OCI-LY7 (cell line): ENCODE measurements at regions of chr7 and their contacts with region 1.

Region 1: GRCh38 chr7:121395961-121396757 is at the start of gene FAM3C:
- DNase-seq: peak; percentile 91
- H3K4me3 ChIP-seq: peak within 1 kb of the TSS; percentile 88
- H3K27ac ChIP-seq: peak within 1 kb of the TSS; percentile 48
- H3K4me1 ChIP-seq: peaks cover 17% of the 10 kb centered on the region
- CTCF ChIP-seq: peak; percentile 81
- total RNA-seq, gene FAM3C: 18.1 and 22.9 TPM in 2 replicates

Region 2: DNA sequence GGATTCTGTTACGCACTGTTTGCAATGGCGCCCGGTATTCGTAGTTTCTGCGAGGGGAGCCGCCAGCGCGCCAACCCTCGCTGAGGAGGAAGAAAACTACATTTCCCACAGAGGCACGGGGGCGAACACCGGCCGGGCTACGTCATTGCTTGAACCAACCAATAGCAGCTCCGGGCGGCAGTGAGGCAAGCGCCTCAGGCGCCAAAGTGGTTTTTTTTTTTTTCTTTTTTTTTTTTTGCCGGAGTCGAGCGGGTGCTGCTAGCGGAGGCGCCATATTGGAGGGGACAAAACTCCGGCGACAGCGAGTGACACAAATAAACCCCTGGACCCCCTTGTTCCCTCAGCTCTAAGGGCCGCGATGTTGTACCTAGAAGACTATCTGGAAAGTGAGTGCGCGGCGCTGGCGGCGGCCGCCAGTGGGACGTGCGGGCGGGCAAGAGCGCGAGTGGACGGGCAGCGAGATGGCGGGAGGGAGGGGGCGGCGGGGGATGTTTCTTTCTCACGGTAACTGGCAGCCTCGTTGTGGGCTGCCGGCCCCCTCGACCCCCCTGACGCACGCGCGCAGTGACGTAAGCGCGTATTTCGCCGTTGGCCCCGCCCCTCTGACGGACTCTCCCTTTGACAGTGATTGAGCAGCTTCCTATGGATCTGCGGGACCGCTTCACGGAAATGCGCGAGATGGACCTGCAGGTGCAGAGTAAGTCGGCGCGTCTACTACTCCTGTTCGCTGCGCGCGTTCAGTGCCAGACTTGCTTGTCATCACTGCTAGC is 445.4 kb before region 1 on chr7 and contains the start of gene ING3:
- CTCF ChIA-PET with region 1: no interaction called
- POLR2A ChIA-PET with region 1: no interaction called
- intact Hi-C with region 1: loop called (anchors 5 kb)
- DNase-seq: peak; percentile 98
- H3K4me3 ChIP-seq: peak within 1 kb of the TSS; percentile 77
- H3K27ac ChIP-seq: peak within 1 kb of the TSS; percentile 80
- H3K4me1 ChIP-seq: peaks cover 14% of the 10 kb centered on the region
- CTCF ChIP-seq: no peak
- total RNA-seq, gene ING3: 12.5 and 21.4 TPM in 2 replicates

Region 3: DNA sequence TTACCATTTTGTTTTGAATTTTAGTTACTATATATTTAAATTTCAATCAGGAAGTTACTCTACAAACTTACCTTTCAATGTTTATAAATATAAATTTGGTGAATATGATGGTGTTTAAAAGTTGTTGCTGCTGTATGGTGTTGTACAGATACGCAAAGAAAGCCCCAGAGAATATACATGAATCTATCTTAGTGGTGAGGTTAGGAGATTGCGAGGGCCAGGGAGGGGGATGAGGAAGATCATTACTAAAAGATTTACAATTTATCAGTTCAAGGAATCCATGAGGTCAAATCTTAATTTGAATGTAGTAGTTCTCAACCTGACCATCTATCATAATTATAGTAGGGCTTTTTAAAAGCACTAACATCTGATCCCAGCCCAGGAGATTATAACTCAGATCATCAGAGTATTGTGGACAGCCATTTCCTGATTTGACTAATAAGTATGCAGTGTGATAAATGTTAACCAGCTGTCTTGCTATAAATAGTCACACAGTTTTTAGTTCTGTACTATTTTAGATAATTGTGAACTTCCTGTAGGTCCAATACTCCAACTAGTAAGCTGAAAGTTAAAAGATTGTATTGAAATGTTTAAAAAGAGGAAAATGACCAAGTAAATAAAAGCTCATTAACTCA is 23.7 kb before region 1 on chr7:
- CTCF ChIA-PET with region 1: interaction called, 4 read pairs
- POLR2A ChIA-PET with region 1: interaction called, 15 read pairs
- intact Hi-C with region 1: loop called (anchors 2 kb)
- DNase-seq: peak; percentile 59
- H3K4me3 ChIP-seq: peak overlapping the region; percentile 31
- H3K27ac ChIP-seq: peak overlapping the region; percentile 52
- H3K4me1 ChIP-seq: peaks cover 35% of the 10 kb centered on the region
- CTCF ChIP-seq: no peak

Region 4: DNA sequence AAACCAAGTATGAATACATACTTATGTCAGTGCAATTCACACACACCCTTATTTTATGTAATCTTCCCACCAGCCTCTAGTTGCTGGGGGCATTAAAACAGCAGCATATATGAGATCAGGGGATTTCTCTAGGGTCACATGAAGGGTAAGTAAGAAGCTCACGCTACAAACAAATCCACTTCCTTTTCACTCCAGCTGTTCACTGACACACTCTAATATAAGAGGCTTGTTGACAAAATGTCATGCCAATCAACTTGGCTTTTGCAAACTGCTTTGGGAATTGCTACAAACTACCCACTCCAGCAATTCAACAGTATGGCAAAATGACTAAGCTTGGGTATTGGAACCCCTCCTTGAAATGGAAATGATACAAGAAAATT is 10.4 kb before region 1 on chr7:
- CTCF ChIA-PET with region 1: interaction called, 6 read pairs
- POLR2A ChIA-PET with region 1: interaction called, 25 read pairs
- intact Hi-C with region 1: no loop called
- DNase-seq: peak; percentile 38
- H3K4me3 ChIP-seq: no peak overlapping the region
- H3K27ac ChIP-seq: no peak overlapping the region
- H3K4me1 ChIP-seq: peaks cover 50% of the 10 kb centered on the region
- CTCF ChIP-seq: no peak

Region 5: DNA sequence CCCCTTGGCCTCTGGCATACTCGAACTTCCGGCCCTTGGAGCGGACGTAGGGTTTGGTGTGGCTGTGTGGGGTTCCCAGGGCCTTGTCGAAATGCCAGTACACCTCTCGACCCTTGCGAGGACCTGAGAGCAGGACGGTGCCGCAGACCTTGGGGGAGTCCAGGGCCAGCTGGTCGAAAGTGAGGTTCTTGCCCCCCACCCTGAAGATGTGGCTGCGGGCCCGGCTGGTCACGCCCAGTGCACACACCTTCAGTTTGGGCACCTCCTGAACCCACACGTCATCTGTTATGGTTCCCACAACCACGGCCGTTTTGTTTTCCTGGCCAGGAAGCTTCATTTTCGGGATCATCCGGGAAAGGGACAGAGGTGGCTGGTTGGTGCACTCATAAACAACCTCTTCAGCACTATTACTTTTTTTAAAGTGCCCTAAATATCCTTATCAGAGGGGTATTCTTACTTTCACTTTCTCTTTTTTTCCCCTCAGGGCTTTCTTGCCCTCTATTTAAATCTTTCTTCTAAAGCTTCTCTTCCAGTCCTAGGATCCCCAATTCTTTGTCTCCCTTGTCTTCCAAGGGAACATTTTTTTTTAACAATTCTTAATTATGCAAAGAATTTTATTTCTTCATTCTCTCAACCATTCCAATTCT is 44.8 kb after region 1 on chr7:
- CTCF ChIA-PET with region 1: no interaction called
- POLR2A ChIA-PET with region 1: interaction called, 8 read pairs
- intact Hi-C with region 1: loop called (anchors 1 kb)
- DNase-seq: no peak
- H3K4me3 ChIP-seq: peak overlapping the region; percentile 50
- H3K27ac ChIP-seq: no peak overlapping the region
- H3K4me1 ChIP-seq: peaks cover 30% of the 10 kb centered on the region
- CTCF ChIP-seq: no peak